Naive thymus-derived CD8-positive, alpha-beta T cell (primary cell): ENCODE measurements at regions of chr16 and their contacts with region 1.

Region 1: DNA sequence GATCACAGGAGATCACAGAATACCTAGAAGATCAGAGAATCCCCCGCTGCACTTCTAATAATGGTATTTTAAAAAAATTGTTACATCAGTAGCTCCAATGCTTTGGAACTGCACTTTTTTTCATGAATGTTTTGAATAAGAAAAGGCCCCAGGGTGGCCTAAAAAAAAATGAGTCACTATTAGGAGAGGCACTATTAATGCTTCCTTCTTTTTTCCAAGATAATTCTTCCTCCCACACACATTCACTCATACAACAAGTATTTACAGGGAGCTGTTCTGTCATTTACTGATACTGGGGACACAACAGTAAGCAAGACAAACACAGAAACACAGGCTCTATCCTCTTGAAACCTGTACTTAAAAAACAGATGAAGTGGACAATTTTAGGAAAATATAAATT is 675 bp upstream of the PDZD9 start:
- DNase-seq: no peak
- ATAC-seq: no peak
- H3K4me3 Mint-ChIP-seq: peak overlapping the region in 5 of 10 donors; percentile 24 to 78 (median 54)
- H3K27ac Mint-ChIP-seq: peak overlapping the region in 2 of 10 donors; percentile 67 to 84
- H3K4me1 Mint-ChIP-seq: peaks cover 6 to 14% (median 12%) of the 10 kb centered on the region in 4 donors
- H3K27me3 Mint-ChIP-seq: peaks cover 0 to 1% (median 0%) of the 10 kb centered on the region in 5 donors

Region 2: GRCh38 chr16:22264786-22265185 is 263.2 kb after region 1 on chr16:
- POLR2A ChIA-PET with region 1: interaction called, 10 read pairs
- DNase-seq: peak in 2 of 10 donors; percentile 24 to 32
- ATAC-seq: peak; percentile 44 to 56
- H3K4me3 Mint-ChIP-seq: peak overlapping the region in 4 of 10 donors; percentile 5 to 74 (median 38)
- H3K27ac Mint-ChIP-seq: peak overlapping the region in 6 of 10 donors; percentile 9 to 78 (median 58)
- H3K4me1 Mint-ChIP-seq: peaks cover 7 to 23% (median 18%) of the 10 kb centered on the region in 4 donors
- H3K27me3 Mint-ChIP-seq: no peaks in the 10 kb centered on the region